ENCODE measurements at regions of chr14 and their contacts with region 1.

Region 1: DNA sequence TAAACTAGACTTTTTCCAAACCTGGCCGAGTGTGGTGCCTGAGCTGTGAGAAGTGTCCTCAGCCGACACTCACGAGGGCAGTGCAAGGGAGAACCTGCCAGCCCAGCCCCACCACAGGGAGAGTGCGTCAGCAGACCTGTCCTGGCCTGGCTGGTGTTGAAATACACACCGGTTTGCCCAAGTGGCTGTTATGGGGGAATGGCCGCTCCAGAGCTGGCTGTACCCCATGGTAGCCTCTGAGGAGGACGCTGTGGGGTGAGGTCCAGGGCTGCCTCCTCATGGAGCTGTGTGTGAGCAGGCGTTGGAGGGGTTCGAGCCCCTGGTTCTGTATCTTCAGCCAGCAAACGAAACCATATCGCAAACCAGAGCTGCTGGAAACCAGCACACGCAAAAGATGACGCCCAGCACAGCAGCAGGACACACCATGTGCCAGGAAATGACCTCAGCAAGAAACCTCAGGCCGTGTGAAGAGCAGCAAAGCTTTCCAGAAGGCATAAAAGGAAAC is 9.4 kb downstream of the ANKRD9 start:
- DNase-seq: peak in 2 of 4 experiments; percentile 5 to 34
- ATAC-seq: no peak
- H3K4me3 ChIP-seq: no peak overlapping the region
- H3K27ac ChIP-seq: peak overlapping the region; percentile 61; the same call in 2 of the 3 replicates
- H3K4me1 ChIP-seq: peaks cover 30 to 72% of the 10 kb centered on the region in 2 experiments
- H3K27me3 ChIP-seq: no peaks in the 10 kb centered on the region
- CTCF ChIP-seq: no peak
- EP300 ChIP-seq: no peak
- POLR2A ChIP-seq: no peak
- RAD21 ChIP-seq: no peak

Region 2: DNA sequence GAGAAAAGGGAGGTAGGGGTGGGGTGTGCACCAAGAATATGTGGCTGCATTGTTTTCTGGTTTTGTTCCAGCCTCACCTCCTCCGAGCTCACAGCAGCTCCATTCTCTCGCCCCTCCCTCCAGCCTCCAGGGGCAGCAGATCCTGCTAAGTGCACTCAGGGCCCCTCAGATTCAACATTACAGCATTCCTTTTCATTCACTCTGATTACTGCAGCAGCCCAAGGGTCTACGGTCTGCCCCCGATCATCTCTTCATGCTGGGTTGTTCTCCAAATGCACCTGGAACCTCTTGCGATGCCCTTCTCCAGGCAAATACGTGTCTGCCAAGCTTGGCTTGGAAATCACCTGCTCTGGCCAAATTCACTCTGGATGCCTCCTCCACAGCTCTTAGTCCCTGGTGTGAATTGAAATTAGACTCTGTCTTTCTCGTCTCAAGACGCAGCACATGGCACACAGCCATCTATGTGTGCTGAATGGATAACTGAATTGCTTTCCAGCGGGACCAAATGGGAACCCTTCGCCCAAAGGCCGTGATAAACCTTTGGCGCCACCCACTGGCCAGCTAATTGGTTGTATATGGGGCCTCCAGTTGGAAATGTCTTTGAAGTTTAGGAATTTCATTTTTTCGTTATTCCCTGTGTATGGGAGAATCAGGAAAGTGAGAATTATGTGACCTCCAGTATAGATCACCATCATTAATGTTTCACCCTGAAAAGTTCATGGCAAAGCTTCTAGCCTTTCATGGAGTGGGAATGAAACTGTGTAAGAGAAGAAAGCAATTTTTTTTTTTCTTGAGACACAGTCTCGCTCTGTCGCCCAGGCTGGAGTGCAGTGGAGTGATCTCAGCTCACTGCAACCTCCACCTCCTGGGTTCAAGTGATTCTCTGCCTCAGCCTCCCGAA is 403.7 kb before region 1 on chr14:
- CTCF ChIA-PET with region 1: no interaction called
- POLR2A ChIA-PET with region 1: no interaction called
- in situ Hi-C with region 1: no loop called
- intact Hi-C with region 1: no loop called
- DNase-seq: peak; percentile 48 to 86 (median 60)
- ATAC-seq: peak; percentile 81
- H3K4me3 ChIP-seq: no peak overlapping the region
- H3K27ac ChIP-seq: peak overlapping the region; percentile 70; the same call in 2 of the 3 replicates
- H3K4me1 ChIP-seq: peaks cover 27 to 31% of the 10 kb centered on the region in 2 experiments
- H3K27me3 ChIP-seq: no peaks in the 10 kb centered on the region
- CTCF ChIP-seq: peak; percentile 79 to 90 (median 87)
- EP300 ChIP-seq: no peak
- POLR2A ChIP-seq: no peak
- RAD21 ChIP-seq: peak; percentile 75 to 84

Region 3: GRCh38 chr14:102485696-102486488 is 14.3 kb before region 1 on chr14:
- CTCF ChIA-PET with region 1: no interaction called
- POLR2A ChIA-PET with region 1: interaction called, 10 read pairs
- in situ Hi-C with region 1: no loop called
- intact Hi-C with region 1: no loop called
- DNase-seq: no peak
- ATAC-seq: peak; percentile 45; the same call in 1 of the 3 replicates
- H3K4me3 ChIP-seq: no peak overlapping the region
- H3K27ac ChIP-seq: no peak overlapping the region
- H3K4me1 ChIP-seq: peaks cover 2 to 4% of the 10 kb centered on the region in 2 experiments; a peak in 1 of 5 replicates
- H3K27me3 ChIP-seq: no peaks in the 10 kb centered on the region
- CTCF ChIP-seq: no peak
- EP300 ChIP-seq: no peak
- POLR2A ChIP-seq: no peak
- RAD21 ChIP-seq: no peak

Region 4: DNA sequence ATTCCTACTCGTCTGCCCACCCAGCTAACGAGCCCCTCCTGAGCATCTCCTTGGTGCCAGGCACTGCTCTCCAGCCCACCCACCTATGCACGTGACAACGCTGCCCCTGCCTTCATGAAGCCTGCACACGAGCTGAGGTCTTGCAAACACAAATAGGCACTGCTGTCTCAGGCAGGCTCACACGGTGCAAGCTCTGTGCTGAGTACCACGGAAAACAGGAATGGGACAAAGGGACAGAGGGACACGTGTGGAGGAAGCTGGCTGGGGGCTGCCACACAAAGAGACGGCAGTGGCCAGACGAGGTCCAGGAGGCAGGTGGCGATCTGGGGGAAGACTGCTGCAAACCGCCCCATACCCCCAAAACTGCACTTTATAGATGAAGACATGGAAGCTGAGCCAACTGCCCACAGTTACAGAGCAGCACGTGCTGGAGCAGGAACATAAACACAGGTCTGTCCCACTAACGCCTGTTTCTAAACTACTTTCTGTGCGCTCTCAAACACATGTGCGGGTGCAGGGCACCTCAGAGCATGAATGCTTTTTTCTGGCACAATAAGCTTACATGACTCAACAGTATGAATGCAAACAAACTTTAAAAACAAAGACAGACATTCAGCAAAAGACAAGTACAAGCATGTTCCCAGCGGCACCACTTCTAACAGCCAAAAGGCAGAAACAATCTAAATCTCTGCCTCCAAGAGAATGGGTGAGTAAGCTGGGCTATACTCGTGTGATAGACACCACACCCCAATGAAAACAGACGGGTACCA is 486.8 kb after region 1 on chr14:
- CTCF ChIA-PET with region 1: no interaction called
- POLR2A ChIA-PET with region 1: no interaction called
- in situ Hi-C with region 1: no loop called
- intact Hi-C with region 1: no loop called
- DNase-seq: no peak
- ATAC-seq: no peak
- H3K4me3 ChIP-seq: no peak overlapping the region
- H3K27ac ChIP-seq: no peak overlapping the region
- H3K4me1 ChIP-seq: no peaks in the 10 kb centered on the region
- H3K27me3 ChIP-seq: no peaks in the 10 kb centered on the region
- CTCF ChIP-seq: no peak
- EP300 ChIP-seq: no peak
- POLR2A ChIP-seq: no peak
- RAD21 ChIP-seq: no peak